Esophagus muscularis mucosa (tissue), 4 donors: ENCODE measurements at regions of chr15 and their contacts with region 1.

Region 1: GRCh38 chr15:69452692-69453521 is at the start of gene RPLP1:
- DNase-seq: peak; percentile 99
- H3K4me3 ChIP-seq: peak within 1 kb of the TSS; percentile 71 to 87 (median 82)
- H3K27ac ChIP-seq: peak within 1 kb of the TSS; percentile 84 to 96 (median 93)
- H3K4me1 ChIP-seq: peaks cover 28 to 43% (median 32%) of the 10 kb centered on the region in 4 donors
- H3K27me3 ChIP-seq: no peaks in the 10 kb centered on the region
- CTCF ChIP-seq: no peak
- EP300 ChIP-seq: no peak
- POLR2A ChIP-seq: peak; percentile 93
- total RNA-seq, gene RPLP1: 460 to 623 (median 514) TPM

Region 2: GRCh38 chr15:69414701-69415161 is 38.2 kb before region 1 on chr15:
- intact Hi-C with region 1: loop called (anchors 5 kb)
- DNase-seq: no peak
- H3K4me3 ChIP-seq: peak overlapping the region; percentile 83 to 93 (median 85)
- H3K27ac ChIP-seq: peak overlapping the region; percentile 74 to 90 (median 82)
- H3K4me1 ChIP-seq: peaks cover 0 to 20% (median 16%) of the 10 kb centered on the region in 4 donors
- H3K27me3 ChIP-seq: no peaks in the 10 kb centered on the region
- CTCF ChIP-seq: no peak
- EP300 ChIP-seq: no peak
- POLR2A ChIP-seq: no peak

Region 3: GRCh38 chr15:69535101-69535638 is 82.3 kb after region 1 on chr15:
- intact Hi-C with region 1: no loop called
- DNase-seq: no peak
- H3K4me3 ChIP-seq: no peak overlapping the region
- H3K27ac ChIP-seq: no peak overlapping the region
- H3K4me1 ChIP-seq: peaks cover 0 to 5% (median 2%) of the 10 kb centered on the region in 4 donors
- H3K27me3 ChIP-seq: peaks cover 0 to 4% (median 0%) of the 10 kb centered on the region in 4 donors
- CTCF ChIP-seq: no peak
- EP300 ChIP-seq: no peak
- POLR2A ChIP-seq: no peak